Activated CD4-positive, alpha-beta memory T cell treated with anti-CD3 and anti-CD28 coated beads, Interleukin-2, amount 10 ng/mL, durations not matched to agents 7 days and 5 days (primary cell): ENCODE measurements at regions of chr12 and their contacts with region 1.

Region 1: DNA sequence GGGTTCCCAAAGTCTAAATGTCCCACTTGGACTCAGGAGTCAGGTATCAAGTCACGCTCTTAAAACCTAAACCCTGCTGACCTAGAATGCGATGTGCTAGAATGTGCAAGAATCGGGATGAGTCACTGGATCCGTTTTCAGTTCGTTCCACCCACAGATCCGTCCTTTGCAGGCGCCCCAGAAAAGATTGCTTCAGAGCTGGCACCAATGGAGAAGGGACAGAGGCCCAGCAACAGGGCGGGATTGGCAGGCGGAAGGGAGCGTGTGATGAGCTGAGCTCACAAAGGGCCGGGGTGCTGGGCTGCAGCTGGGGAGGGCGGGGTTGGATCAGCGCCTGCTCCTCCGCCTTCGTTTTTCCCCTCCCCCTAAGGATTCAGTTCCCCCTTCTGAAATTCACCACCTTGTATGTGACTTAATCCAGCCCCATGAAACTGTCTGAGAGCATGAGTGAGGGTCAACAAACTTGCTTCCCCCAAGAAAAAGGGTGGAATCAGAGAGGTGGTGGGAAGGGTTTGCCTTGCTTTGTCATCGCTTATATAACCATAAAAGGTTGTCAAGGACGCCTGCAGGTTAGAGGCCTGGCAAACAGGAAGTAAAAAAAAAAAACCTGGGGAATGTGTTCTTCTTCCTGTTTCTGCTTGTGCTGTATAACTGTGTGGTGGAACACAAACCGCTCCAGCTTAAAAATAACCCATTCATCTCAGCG is 2.8 kb upstream of the UBC start:
- DNase-seq: peak; percentile 96
- H3K4me3 Mint-ChIP-seq: peak overlapping the region; percentile 100
- H3K27ac Mint-ChIP-seq: peak overlapping the region; percentile 99
- H3K4me1 Mint-ChIP-seq: peaks cover 88% of the 10 kb centered on the region
- H3K27me3 Mint-ChIP-seq: no peaks in the 10 kb centered on the region

Region 2: DNA sequence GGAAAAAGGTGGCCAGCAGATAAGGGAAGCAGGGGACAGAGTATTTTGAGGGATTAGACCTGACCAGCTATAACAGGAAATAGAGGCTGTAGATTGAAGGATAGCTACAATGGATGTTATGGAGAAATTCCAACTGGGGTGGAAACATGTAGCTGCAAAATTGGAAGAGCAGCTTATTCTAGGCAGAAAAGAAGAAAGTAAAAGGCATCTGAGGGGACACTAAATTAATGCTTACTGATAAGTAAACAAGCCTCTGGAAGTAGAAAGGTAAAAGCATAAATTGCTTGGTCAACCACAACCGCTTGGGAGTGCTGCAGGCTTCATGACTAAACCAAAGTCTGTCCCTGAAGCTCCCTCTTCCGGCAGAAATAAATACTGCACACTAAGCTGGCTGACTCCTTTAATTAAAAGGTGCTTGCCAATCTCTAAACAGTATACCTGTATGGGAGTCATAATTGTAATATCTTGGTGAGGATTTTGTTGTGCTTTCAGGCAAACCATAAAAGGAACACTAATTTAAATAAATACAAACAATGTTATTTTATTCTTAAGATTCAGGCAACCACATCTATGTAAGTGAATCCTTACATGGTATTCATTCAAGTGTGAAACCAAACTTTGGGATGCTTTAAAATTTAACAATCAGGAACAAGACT is 10.6 kb before region 1 on chr12:
- CTCF ChIA-PET with region 1: interaction called, 64 read pairs
- POLR2A ChIA-PET with region 1: interaction called, 44 read pairs
- DNase-seq: peak; percentile 90
- H3K4me3 Mint-ChIP-seq: no peak overlapping the region
- H3K27ac Mint-ChIP-seq: no peak overlapping the region
- H3K4me1 Mint-ChIP-seq: peaks cover 33% of the 10 kb centered on the region
- H3K27me3 Mint-ChIP-seq: peaks cover 2% of the 10 kb centered on the region

Region 3: DNA sequence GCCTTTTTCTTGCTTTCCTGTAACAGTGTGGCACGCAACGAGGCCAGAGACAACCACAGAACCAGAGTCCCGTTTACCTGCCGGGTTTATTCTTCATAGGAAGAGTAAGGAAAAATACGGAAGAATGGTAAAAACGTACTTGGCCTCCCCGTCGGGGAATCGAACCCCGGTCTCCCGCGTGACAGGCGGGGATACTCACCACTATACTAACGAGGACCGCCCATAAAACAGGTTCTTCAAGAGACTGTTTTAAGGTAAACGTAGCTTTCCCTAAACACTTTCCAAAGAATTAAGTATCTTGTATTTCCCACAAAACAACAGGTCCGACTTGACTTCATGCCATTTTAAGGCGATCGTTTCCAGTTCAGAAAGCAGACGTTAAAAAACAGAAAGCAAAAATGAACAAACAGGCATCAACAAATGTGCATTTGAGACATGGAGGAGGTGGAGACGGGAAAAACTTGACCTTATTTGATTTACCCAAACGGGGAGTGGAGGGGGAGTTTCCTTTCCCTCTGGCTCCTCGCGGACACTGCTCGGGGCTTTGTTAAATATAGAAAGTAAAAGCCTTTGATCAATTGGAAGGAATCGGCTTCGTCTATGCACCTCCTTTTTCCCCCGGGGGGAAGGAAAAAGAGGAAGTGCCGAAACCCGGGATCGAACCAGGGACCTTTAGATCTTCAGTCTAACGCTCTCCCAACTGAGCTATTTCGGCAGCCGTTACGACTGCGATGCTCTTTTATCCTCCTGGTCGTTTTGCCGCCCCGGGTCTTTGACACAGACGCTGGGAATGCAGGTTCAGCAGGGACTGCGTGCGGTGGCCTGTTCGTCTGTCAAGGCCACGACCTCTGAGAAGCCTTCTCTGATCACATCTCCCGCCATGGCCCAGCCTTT is 10.2 kb after region 1 on chr12:
- CTCF ChIA-PET with region 1: interaction called, 10 read pairs
- POLR2A ChIA-PET with region 1: interaction called, 462 read pairs
- DNase-seq: peak; percentile 93
- H3K4me3 Mint-ChIP-seq: peak overlapping the region; percentile 83
- H3K27ac Mint-ChIP-seq: peak overlapping the region; percentile 96
- H3K4me1 Mint-ChIP-seq: peaks cover 32% of the 10 kb centered on the region
- H3K27me3 Mint-ChIP-seq: peaks cover 6% of the 10 kb centered on the region

Region 4: DNA sequence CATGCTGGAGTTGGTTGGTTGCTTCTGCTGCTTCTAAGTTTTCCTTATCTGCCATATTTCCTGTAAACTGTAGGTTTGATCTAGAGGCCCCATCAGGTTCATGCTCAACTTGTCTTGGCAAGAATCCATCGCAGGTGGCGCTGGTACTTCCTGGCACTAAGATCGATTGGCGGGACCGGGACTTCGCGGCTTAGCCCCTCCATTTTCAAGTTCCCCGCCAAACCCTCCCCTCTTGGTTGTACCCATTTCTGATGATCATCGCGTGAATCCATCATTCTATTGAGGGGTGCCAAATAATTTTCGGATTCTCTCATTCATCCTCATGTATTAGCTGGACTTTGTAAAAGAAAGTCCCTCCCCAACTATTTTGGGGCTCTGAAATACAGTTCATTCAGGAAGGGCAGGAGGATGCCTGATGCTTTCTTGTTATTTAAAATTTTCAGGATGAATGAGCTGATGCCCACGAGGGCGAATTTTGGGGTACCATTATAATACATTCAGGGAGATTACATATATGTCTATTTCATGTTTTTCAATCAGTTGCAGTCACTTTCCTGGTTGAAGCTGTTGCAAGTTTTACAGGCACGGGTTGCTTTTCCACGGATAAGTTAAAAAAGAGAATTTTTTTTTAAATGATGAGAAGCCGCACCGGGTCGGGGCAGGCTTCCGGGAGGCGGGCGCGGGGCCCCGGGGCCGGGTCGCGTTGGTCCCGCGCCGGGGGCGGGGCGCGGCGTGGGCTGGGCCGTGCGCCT is 75.8 kb after region 1 on chr12:
- CTCF ChIA-PET with region 1: interaction called, 3 read pairs
- POLR2A ChIA-PET with region 1: interaction called, 28 read pairs
- DNase-seq: peak; percentile 89
- H3K4me3 Mint-ChIP-seq: peak overlapping the region; percentile 75
- H3K27ac Mint-ChIP-seq: peak overlapping the region; percentile 85
- H3K4me1 Mint-ChIP-seq: peaks cover 34% of the 10 kb centered on the region
- H3K27me3 Mint-ChIP-seq: no peaks in the 10 kb centered on the region